CD4-positive, alpha-beta T cell (primary cell): ENCODE measurements at regions of chr2 and their contacts with region 1.

Region 1: GRCh38 chr2:43995733-43996533 is at the start of gene LRPPRC:
- DNase-seq: peak; percentile 80 to 96 (median 85)
- ATAC-seq: peak; percentile 95
- H3K4me3 ChIP-seq: peak within 1 kb of the TSS; percentile 99
- H3K4me3 Mint-ChIP-seq: peak within 1 kb of the TSS; percentile 91
- H3K27ac ChIP-seq: peak within 1 kb of the TSS; percentile 74 to 91
- H3K27ac Mint-ChIP-seq: peak within 1 kb of the TSS; percentile 89
- H3K4me1 ChIP-seq: peaks cover 32% of the 10 kb centered on the region
- H3K4me1 Mint-ChIP-seq: peaks cover 47% of the 10 kb centered on the region
- H3K27me3 ChIP-seq: no peaks in the 10 kb centered on the region
- H3K27me3 Mint-ChIP-seq: peaks cover 6% of the 10 kb centered on the region
- CTCF ChIP-seq: no peak
- total RNA-seq, gene LRPPRC: 55.2 to 55.4 TPM

Region 2: GRCh38 chr2:43773876-43774613 is 221.9 kb before region 1 on chr2 and contains the start of gene DYNC2LI1:
- CTCF ChIA-PET with region 1: no interaction called
- POLR2A ChIA-PET with region 1: no interaction called
- intact Hi-C with region 1: loop called in 1 of 2 experiments (anchors 5 kb)
- DNase-seq: peak; percentile 51 to 87 (median 66)
- ATAC-seq: peak; percentile 96
- H3K4me3 ChIP-seq: peak within 1 kb of the TSS; percentile 89
- H3K4me3 Mint-ChIP-seq: peak within 1 kb of the TSS; percentile 86
- H3K27ac ChIP-seq: no peak within 1 kb of the TSS
- H3K27ac Mint-ChIP-seq: peak within 1 kb of the TSS; percentile 19
- H3K4me1 ChIP-seq: peaks cover 11% of the 10 kb centered on the region
- H3K4me1 Mint-ChIP-seq: peaks cover 12% of the 10 kb centered on the region
- H3K27me3 ChIP-seq: no peaks in the 10 kb centered on the region
- H3K27me3 Mint-ChIP-seq: peaks cover 9% of the 10 kb centered on the region
- CTCF ChIP-seq: no peak
- total RNA-seq, gene DYNC2LI1: 2.1 to 2.2 TPM

Region 3: DNA sequence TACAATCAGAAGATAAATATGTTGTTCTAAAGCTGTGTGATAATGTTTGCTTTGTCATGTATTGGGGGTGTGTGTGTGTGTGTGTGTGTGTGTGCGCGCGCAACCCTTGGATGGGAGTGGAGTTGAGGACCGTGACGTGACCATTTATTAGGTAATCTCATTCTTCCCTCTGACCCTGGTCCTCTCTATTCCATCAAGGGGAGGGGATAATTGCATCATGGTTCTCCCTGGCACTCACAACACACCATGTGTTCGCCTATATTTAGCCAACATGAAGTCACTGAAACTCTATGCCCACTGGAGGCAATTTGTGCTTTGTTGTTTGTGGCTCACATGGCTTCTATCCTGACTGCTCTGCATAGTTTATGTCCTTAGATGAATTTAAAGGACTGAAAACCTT is 79.6 kb after region 1 on chr2:
- CTCF ChIA-PET with region 1: no interaction called
- POLR2A ChIA-PET with region 1: no interaction called
- intact Hi-C with region 1: no loop called
- DNase-seq: no peak
- ATAC-seq: no peak
- H3K4me3 ChIP-seq: no peak overlapping the region
- H3K4me3 Mint-ChIP-seq: no peak overlapping the region
- H3K27ac ChIP-seq: no peak overlapping the region
- H3K27ac Mint-ChIP-seq: no peak overlapping the region
- H3K4me1 ChIP-seq: no peaks in the 10 kb centered on the region
- H3K4me1 Mint-ChIP-seq: no peaks in the 10 kb centered on the region
- H3K27me3 ChIP-seq: no peaks in the 10 kb centered on the region
- H3K27me3 Mint-ChIP-seq: no peaks in the 10 kb centered on the region
- CTCF ChIP-seq: no peak

Region 4: GRCh38 chr2:45567974-45568789 is 1572.2 kb after region 1 on chr2:
- CTCF ChIA-PET with region 1: no interaction called
- POLR2A ChIA-PET with region 1: no interaction called
- intact Hi-C with region 1: loop called in 1 of 2 experiments (anchors 10 kb)
- DNase-seq: peak in 4 of 14 experiments; percentile 7 to 91 (median 86)
- ATAC-seq: peak; percentile 97
- H3K4me3 ChIP-seq: peak overlapping the region; percentile 55
- H3K4me3 Mint-ChIP-seq: peak overlapping the region; percentile 87
- H3K27ac ChIP-seq: peak overlapping the region; percentile 58 to 85
- H3K27ac Mint-ChIP-seq: peak overlapping the region; percentile 87
- H3K4me1 ChIP-seq: peaks cover 12% of the 10 kb centered on the region
- H3K4me1 Mint-ChIP-seq: peaks cover 47% of the 10 kb centered on the region
- H3K27me3 ChIP-seq: no peaks in the 10 kb centered on the region
- H3K27me3 Mint-ChIP-seq: no peaks in the 10 kb centered on the region
- CTCF ChIP-seq: no peak